Activated B cell treated with CpG ODN at 0.5 μM for 24 hours (primary cell): ENCODE measurements at regions of chr4 and their contacts with region 1.

Region 1: GRCh38 chr4:164779811-164780216 is 25.9 kb downstream of the SMIM31 start:
- DNase-seq: no peak
- ATAC-seq: no peak
- H3K4me3 Mint-ChIP-seq: no peak overlapping the region
- H3K27ac Mint-ChIP-seq: no peak overlapping the region
- H3K4me1 Mint-ChIP-seq: no peaks in the 10 kb centered on the region
- H3K27me3 Mint-ChIP-seq: no peaks in the 10 kb centered on the region
- CTCF ChIP-seq: no peak

Region 2: GRCh38 chr4:164997324-164997723 is 217.5 kb after region 1 on chr4:
- CTCF ChIA-PET with region 1: no interaction called
- POLR2A ChIA-PET with region 1: no interaction called
- intact Hi-C with region 1: loop called (anchors 1 kb)
- DNase-seq: no peak
- ATAC-seq: no peak
- H3K4me3 Mint-ChIP-seq: no peak overlapping the region
- H3K27ac Mint-ChIP-seq: no peak overlapping the region
- H3K4me1 Mint-ChIP-seq: no peaks in the 10 kb centered on the region
- H3K27me3 Mint-ChIP-seq: peaks cover 13% of the 10 kb centered on the region
- CTCF ChIP-seq: no peak

Region 3: DNA sequence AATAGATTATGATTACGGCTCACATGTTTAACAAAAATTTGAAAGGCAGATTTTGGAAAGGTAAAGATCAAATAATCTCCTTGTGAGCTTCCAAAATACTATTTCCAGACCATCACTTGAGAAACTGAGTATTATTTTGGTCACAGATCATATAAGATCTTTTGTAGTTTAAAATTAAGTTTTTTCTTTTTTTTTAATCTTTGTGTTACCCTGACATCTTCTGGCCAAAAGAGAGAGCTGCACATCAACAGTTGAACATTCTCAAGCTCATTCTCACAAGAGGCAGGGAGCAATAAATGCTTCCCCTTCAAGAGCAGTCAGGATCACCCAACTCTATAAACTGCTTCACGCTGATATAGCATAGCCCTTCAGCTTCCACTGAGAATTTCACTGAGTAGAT is 317.0 kb after region 1 on chr4:
- CTCF ChIA-PET with region 1: no interaction called
- POLR2A ChIA-PET with region 1: no interaction called
- intact Hi-C with region 1: loop called (anchors 1 kb)
- DNase-seq: no peak
- ATAC-seq: peak; percentile 31
- H3K4me3 Mint-ChIP-seq: no peak overlapping the region
- H3K27ac Mint-ChIP-seq: no peak overlapping the region
- H3K4me1 Mint-ChIP-seq: no peaks in the 10 kb centered on the region
- H3K27me3 Mint-ChIP-seq: no peaks in the 10 kb centered on the region
- CTCF ChIP-seq: no peak